GM10248 (cell line): ENCODE measurements at regions of chr9 and their contacts with region 1.

Region 1: GRCh38 chr9:37465249-37466036 is at the start of gene ZBTB5:
- DNase-seq: peak; percentile 97
- CTCF ChIP-seq: no peak

Region 2: DNA sequence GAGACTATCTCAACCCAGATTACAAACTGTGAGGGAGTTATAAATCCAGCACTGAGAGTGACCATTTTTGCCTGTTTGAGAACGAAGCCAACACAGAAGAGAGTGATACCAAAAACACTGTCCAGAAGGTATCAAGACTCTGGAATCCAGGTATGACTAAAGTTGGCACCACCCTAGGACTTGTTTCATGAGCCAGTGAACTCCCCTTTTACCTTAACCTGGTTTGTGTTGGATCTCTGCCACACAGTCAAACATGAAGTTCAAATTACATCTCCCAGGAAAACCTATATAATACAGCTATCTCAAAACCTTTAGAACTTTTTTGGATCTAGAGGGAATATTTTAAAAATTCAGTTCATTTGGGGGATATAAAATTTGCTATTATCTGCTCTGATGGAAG is 11.6 kb before region 1 on chr9:
- CTCF ChIA-PET with region 1: interaction called, 16 read pairs
- POLR2A ChIA-PET with region 1: no interaction called
- DNase-seq: no peak
- CTCF ChIP-seq: no peak

Region 3: DNA sequence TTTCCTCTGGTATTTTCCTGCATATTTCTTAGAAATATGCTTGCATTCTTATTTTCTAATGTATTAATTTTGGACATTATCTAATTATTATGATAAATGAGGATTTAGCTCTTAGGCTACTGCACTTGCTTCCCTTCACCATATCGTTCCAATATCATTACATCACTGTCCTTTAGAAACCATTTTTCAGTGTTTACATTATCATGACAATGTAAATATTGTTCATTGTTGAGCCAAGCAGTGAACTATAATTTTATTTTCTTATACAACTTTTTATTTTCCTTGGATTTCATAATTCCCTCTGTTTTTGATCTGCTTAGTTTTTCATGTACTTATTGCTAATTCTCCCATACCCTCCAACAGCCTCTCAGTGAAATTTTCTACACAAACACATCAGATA is 223.6 kb after region 1 on chr9:
- CTCF ChIA-PET with region 1: no interaction called
- POLR2A ChIA-PET with region 1: interaction called, 10 read pairs
- DNase-seq: no peak
- CTCF ChIP-seq: no peak

Region 4: GRCh38 chr9:37798692-37799091 is 333.2 kb after region 1 on chr9:
- CTCF ChIA-PET with region 1: no interaction called
- POLR2A ChIA-PET with region 1: no interaction called
- DNase-seq: no peak
- CTCF ChIP-seq: no peak